ENCODE measurements at regions of chr10 and their contacts with region 1.

Region 1: GRCh38 chr10:28236591-28236990 is 66.3 kb downstream of the MPP7 start:
- DNase-seq: no peak
- H3K4me3 ChIP-seq: no peak overlapping the region
- H3K27ac ChIP-seq: no peak overlapping the region
- H3K4me1 ChIP-seq: no peaks in the 10 kb centered on the region
- H3K27me3 ChIP-seq: no peaks in the 10 kb centered on the region
- CTCF ChIP-seq: no peak
- POLR2A ChIP-seq: no peak

Region 2: DNA sequence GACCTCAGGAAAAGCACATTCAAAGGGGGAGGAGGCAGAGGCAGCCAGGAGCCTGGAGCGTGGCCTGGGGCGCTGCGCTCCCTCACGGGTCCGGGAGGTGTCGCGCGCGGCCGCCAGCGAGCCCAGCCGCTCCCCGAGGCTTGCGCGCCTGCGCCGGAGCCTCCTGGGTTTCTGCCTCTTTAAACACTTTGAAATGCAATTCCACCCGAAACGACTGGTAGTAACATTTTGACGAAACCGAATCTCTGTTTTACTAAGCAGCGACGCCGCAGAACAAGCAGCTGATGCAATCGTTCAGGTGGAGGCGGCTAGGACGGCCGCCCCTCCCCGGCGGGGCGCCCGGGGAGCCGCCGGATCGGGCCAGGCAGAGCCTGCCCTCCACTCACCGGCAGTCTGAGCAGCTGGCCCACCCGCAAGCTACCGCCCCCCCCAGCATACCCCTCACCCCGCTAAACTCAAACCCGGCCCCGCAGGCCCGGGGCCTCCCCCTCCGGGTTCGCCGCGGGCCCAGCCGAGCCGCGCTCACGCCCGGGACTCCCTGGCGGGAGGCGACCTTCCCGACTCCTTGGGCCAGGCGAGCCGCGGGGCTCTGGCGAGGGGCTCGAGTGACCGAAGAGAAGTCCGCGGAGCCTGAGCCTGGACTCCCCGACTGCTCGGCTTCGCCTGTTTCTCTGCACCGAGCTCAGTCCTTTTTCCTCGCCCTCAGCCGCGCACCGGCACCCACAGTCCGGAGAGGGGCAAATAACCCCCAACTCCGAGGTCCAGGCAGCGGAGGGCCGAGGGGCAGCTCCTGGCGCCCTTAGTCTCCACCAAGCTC is 494.2 kb before region 1 on chr10:
- intact Hi-C with region 1: loop called (anchors 10 kb)
- DNase-seq: no peak
- H3K4me3 ChIP-seq: peak overlapping the region; percentile 54 to 83 (median 70)
- H3K27ac ChIP-seq: peak overlapping the region; percentile 77 to 93 (median 82)
- H3K4me1 ChIP-seq: peaks cover 29 to 62% (median 36%) of the 10 kb centered on the region in 3 donors
- H3K27me3 ChIP-seq: peaks cover 10 to 81% (median 13%) of the 10 kb centered on the region in 4 donors
- CTCF ChIP-seq: peak; percentile 54 to 79 (median 74)
- POLR2A ChIP-seq: peak in 2 of 4 donors; percentile 28 to 30

Region 3: GRCh38 chr10:28367929-28368484 is 131.4 kb after region 1 on chr10:
- intact Hi-C with region 1: no loop called
- DNase-seq: no peak
- H3K4me3 ChIP-seq: no peak overlapping the region
- H3K27ac ChIP-seq: peak overlapping the region in 2 of 4 donors; percentile 21 to 60
- H3K4me1 ChIP-seq: peaks cover 0 to 14% (median 9%) of the 10 kb centered on the region in 3 donors
- H3K27me3 ChIP-seq: no peaks in the 10 kb centered on the region
- CTCF ChIP-seq: no peak
- POLR2A ChIP-seq: no peak

Measured in esophagus squamous epithelium (tissue), 5 donors.